ENCODE measurements at regions of chr2 and their contacts with region 1.

Region 1: GRCh38 chr2:59131452-59131851 is 890.3 kb upstream of the FANCL start:
- DNase-seq: no peak
- H3K4me3 ChIP-seq: no peak overlapping the region
- H3K27ac ChIP-seq: no peak overlapping the region
- H3K4me1 ChIP-seq: no peaks in the 10 kb centered on the region
- H3K27me3 ChIP-seq: no peaks in the 10 kb centered on the region
- CTCF ChIP-seq: no peak
- EP300 ChIP-seq: no peak
- POLR2A ChIP-seq: no peak

Region 2: GRCh38 chr2:57753636-57754035 is 1377.8 kb before region 1 on chr2:
- in situ Hi-C with region 1: no loop called
- intact Hi-C with region 1: loop called (anchors 5 kb)
- DNase-seq: no peak
- H3K4me3 ChIP-seq: no peak overlapping the region
- H3K27ac ChIP-seq: no peak overlapping the region
- H3K4me1 ChIP-seq: no peaks in the 10 kb centered on the region
- H3K27me3 ChIP-seq: no peaks in the 10 kb centered on the region
- CTCF ChIP-seq: no peak
- EP300 ChIP-seq: no peak
- POLR2A ChIP-seq: no peak

Region 3: GRCh38 chr2:59342166-59342565 is 210.7 kb after region 1 on chr2:
- in situ Hi-C with region 1: no loop called
- intact Hi-C with region 1: no loop called
- DNase-seq: no peak
- H3K4me3 ChIP-seq: no peak overlapping the region
- H3K27ac ChIP-seq: no peak overlapping the region
- H3K4me1 ChIP-seq: no peaks in the 10 kb centered on the region
- H3K27me3 ChIP-seq: no peaks in the 10 kb centered on the region
- CTCF ChIP-seq: no peak
- EP300 ChIP-seq: no peak
- POLR2A ChIP-seq: no peak

Region 4: DNA sequence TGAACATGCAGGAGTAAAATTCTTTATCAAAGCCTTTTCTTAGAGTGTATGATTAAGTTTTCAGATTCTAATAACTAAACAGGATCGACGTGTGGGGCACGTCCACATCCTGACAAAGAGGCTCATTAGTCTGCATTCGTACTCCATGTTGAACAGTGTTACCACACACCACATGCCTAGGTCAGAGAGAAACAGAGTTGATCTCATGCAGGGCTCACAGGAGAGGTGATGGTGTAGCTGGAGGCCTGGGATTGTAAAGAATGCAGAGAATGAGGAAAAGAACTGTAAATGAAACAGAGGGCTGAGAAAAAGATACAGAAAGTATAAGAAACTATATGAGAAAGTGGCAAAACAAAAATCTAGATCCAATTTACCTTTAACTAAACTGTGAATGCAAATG is 789.5 kb after region 1 on chr2:
- in situ Hi-C with region 1: no loop called
- intact Hi-C with region 1: no loop called
- DNase-seq: no peak
- H3K4me3 ChIP-seq: no peak overlapping the region
- H3K27ac ChIP-seq: no peak overlapping the region
- H3K4me1 ChIP-seq: no peaks in the 10 kb centered on the region
- H3K27me3 ChIP-seq: no peaks in the 10 kb centered on the region
- CTCF ChIP-seq: no peak
- EP300 ChIP-seq: no peak
- POLR2A ChIP-seq: no peak

Measured in transverse colon (tissue), 4 donors.